AG04449 (cell line): ENCODE measurements at regions of chr7 and their contacts with region 1.

Region 1: DNA sequence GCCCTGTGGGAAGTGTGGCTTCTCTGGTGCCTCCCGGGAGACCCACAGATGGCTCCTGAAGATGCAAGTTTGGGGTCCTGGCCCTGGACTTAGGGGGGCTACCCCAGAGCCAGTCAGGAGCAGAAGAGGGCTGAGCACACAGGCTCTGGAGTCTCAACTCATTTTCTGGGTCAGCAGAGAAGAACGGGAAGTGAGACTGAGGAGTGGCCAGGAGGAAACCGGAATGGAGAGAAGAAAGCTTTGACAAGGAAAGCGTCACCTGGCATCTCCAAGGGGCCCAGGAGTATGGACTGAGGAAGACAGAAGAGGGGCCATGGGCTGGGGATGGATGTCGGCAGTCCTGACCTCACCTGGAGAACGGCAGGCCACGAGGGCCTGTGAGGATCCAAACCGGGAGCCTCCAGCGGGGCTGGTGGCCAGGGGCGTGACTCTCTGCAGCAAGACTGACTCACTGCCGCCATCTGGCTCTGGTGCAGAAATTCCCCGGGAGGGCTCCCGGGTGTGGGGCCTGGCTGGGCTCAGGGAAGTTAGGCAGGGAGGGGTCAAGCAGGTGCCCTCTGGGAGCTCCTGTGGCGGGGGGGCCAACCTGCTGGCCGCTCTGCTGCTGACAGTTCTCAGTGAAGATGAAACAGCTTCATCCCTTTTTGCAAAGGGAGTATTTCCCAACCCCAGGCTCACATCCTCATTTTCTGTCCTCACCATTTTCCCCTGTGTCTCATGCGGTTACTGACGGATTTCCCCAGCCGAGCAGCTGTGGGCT is 23.6 kb downstream of the DAGLB start:
- DNase-seq: no peak
- H3K4me3 ChIP-seq: no peak overlapping the region
- CTCF ChIP-seq: no peak

Region 2: GRCh38 chr7:6435486-6436384 is 11.6 kb after region 1 on chr7:
- CTCF ChIA-PET with region 1: interaction called, 16 read pairs
- POLR2A ChIA-PET with region 1: no interaction called
- DNase-seq: peak; percentile 16
- H3K4me3 ChIP-seq: no peak overlapping the region
- CTCF ChIP-seq: peak; percentile 86

Region 3: GRCh38 chr7:6476596-6477299 is 52.6 kb after region 1 on chr7:
- CTCF ChIA-PET with region 1: no interaction called
- POLR2A ChIA-PET with region 1: no interaction called
- DNase-seq: no peak
- H3K4me3 ChIP-seq: no peak overlapping the region
- CTCF ChIP-seq: no peak

Region 4: GRCh38 chr7:6589829-6590644 is 165.9 kb after region 1 on chr7 and contains the start of gene INTS15:
- CTCF ChIA-PET with region 1: no interaction called
- POLR2A ChIA-PET with region 1: no interaction called
- DNase-seq: no peak
- H3K4me3 ChIP-seq: peak within 1 kb of the TSS; percentile 93
- CTCF ChIP-seq: peak; percentile 53